ENCODE measurements at regions of chr6 and their contacts with region 1.

Region 1: GRCh38 chr6:7615611-7616383 is 25.8 kb downstream of the SNRNP48 start:
- DNase-seq: peak in 1 of 5 donors; percentile 43
- ATAC-seq: peak in 3 of 4 donors; percentile 16 to 60 (median 47)
- H3K4me3 ChIP-seq: peak overlapping the region in 6 of 12 donors; percentile 3 to 42 (median 33)
- H3K27ac ChIP-seq: no peak overlapping the region
- H3K4me1 ChIP-seq: peaks cover 0 to 29% (median 3%) of the 10 kb centered on the region in 12 donors
- H3K27me3 ChIP-seq: no peaks in the 10 kb centered on the region
- CTCF ChIP-seq: peak; percentile 56 to 78 (median 70)
- POLR2A ChIP-seq: no peak

Region 2: GRCh38 chr6:7042056-7042653 is 573.6 kb before region 1 on chr6:
- intact Hi-C with region 1: loop called in 1 of 10 experiments (anchors 10 kb)
- DNase-seq: peak in 2 of 5 donors; percentile 24 to 69
- ATAC-seq: peak in 3 of 4 donors; percentile 7 to 29 (median 28)
- H3K4me3 ChIP-seq: no peak overlapping the region
- H3K27ac ChIP-seq: peak overlapping the region in 10 of 12 donors; percentile 33 to 84 (median 63)
- H3K4me1 ChIP-seq: peaks cover 0 to 30% (median 7%) of the 10 kb centered on the region in 12 donors
- H3K27me3 ChIP-seq: no peaks in the 10 kb centered on the region
- CTCF ChIP-seq: no peak
- POLR2A ChIP-seq: no peak

Region 3: GRCh38 chr6:7282097-7282906 is 333.5 kb before region 1 on chr6:
- intact Hi-C with region 1: loop called in 8 of 10 experiments (anchors 2 to 10 kb)
- DNase-seq: no peak
- ATAC-seq: no peak
- H3K4me3 ChIP-seq: no peak overlapping the region
- H3K27ac ChIP-seq: peak overlapping the region in 1 of 12 donors; percentile 9
- H3K4me1 ChIP-seq: peaks cover 0 to 20% (median 0%) of the 10 kb centered on the region in 12 donors
- H3K27me3 ChIP-seq: no peaks in the 10 kb centered on the region
- CTCF ChIP-seq: no peak
- POLR2A ChIP-seq: no peak

Region 4: GRCh38 chr6:7312616-7313504 is 302.9 kb before region 1 on chr6 and contains the start of gene SSR1:
- intact Hi-C with region 1: loop called in 2 of 10 experiments (anchors 10 kb)
- DNase-seq: peak; percentile 98 to 99 (median 99)
- ATAC-seq: peak; percentile 100
- H3K4me3 ChIP-seq: peak within 1 kb of the TSS; percentile 78 to 100 (median 90)
- H3K27ac ChIP-seq: peak within 1 kb of the TSS; percentile 51 to 97 (median 94)
- H3K4me1 ChIP-seq: peaks cover 0 to 58% (median 21%) of the 10 kb centered on the region in 12 donors
- H3K27me3 ChIP-seq: no peaks in the 10 kb centered on the region
- CTCF ChIP-seq: peak in 1 of 12 donors; percentile 6
- POLR2A ChIP-seq: peak in 1 of 2 donors; percentile 89
- total RNA-seq, gene SSR1: 20.6 to 106 (median 67.9) TPM

Region 5: DNA sequence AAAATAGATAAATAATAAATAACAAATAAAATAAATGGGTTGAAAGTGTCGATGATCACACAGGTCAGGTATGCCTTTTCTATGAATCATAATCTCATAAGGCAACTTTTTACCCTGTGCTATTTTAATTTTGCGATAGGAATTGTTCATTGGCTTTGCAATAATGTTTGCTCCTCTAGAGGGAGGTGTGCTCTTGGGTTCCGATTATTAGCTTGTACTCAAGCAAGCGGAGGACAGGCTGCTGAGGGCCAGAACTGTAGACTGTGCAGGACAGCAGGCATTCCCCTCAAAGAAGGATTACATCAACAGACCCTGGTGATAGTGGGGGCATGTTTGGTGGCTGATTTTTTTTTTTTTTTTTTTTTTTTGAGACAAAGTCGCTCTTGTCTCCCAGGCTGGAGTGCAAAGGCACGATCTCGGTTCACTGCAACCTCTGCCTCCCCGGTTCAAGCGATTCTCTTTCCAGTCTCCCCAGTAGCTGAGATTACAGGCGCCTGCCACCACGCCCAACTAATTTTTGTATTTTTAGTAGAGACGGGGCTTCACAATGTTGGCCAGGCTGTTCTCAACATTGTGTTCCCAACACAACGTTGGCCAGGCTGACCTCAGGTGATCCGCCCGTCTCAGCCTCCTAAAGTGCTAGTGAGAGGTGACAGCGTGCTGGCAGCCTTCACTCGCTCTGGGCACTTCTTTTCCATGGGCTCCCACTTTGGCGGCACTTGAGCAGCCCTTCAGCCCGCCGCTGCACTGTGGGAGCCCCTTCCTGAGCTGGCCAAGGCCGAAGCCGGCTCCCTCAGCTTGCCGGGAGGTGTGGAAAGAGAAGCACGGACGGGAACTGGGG is 190.6 kb before region 1 on chr6:
- intact Hi-C with region 1: loop called in 7 of 10 experiments (anchors 5 to 10 kb)
- DNase-seq: peak in 4 of 5 donors; percentile 18 to 88 (median 77)
- ATAC-seq: peak; percentile 83 to 93 (median 92)
- H3K4me3 ChIP-seq: no peak overlapping the region
- H3K27ac ChIP-seq: peak overlapping the region in 6 of 12 donors; percentile 7 to 70 (median 44)
- H3K4me1 ChIP-seq: no peaks in the 10 kb centered on the region
- H3K27me3 ChIP-seq: no peaks in the 10 kb centered on the region
- CTCF ChIP-seq: peak; percentile 25 to 63 (median 52)
- POLR2A ChIP-seq: no peak

Region 6: GRCh38 chr6:7438011-7438410 is 177.8 kb before region 1 on chr6:
- intact Hi-C with region 1: no loop called
- DNase-seq: no peak
- ATAC-seq: no peak
- H3K4me3 ChIP-seq: no peak overlapping the region
- H3K27ac ChIP-seq: no peak overlapping the region
- H3K4me1 ChIP-seq: no peaks in the 10 kb centered on the region
- H3K27me3 ChIP-seq: no peaks in the 10 kb centered on the region
- CTCF ChIP-seq: no peak
- POLR2A ChIP-seq: no peak